ENCODE measurements at regions of chr10 and their contacts with region 1.

Region 1: GRCh38 chr10:14556285-14556956 is 218.3 kb downstream of the FAM107B start:
- DNase-seq: peak; percentile 61
- H3K4me3 Mint-ChIP-seq: peak overlapping the region; percentile 25
- H3K27ac Mint-ChIP-seq: peak overlapping the region; percentile 83
- H3K4me1 Mint-ChIP-seq: peaks cover 95% of the 10 kb centered on the region
- H3K27me3 Mint-ChIP-seq: no peaks in the 10 kb centered on the region

Region 2: DNA sequence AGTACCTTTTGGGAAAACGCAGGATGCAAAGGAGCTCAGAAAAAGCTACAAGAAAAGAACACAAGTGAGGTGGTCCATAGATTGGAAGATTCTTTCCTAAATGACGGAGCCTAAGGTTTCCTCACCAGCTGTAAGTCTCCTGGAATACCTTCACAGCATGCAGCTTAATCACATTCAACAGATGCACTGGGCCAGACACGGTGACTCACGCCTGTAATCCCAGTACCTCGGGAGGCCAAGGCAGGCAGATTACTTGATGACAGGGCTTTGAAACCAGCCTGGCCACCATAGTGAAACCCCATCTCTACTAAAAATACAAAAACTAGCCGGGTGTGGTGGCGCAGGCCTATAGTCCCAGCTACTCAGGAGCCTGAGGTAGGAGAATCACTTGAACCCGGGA is 454.4 kb before region 1 on chr10:
- CTCF ChIA-PET with region 1: no interaction called
- POLR2A ChIA-PET with region 1: no interaction called
- intact Hi-C with region 1: no loop called
- DNase-seq: no peak
- H3K4me3 Mint-ChIP-seq: no peak overlapping the region
- H3K27ac Mint-ChIP-seq: no peak overlapping the region
- H3K4me1 Mint-ChIP-seq: no peaks in the 10 kb centered on the region
- H3K27me3 Mint-ChIP-seq: no peaks in the 10 kb centered on the region

Region 3: GRCh38 chr10:14397066-14397465 is 159.4 kb before region 1 on chr10:
- CTCF ChIA-PET with region 1: no interaction called
- POLR2A ChIA-PET with region 1: no interaction called
- intact Hi-C with region 1: no loop called
- DNase-seq: no peak
- H3K4me3 Mint-ChIP-seq: no peak overlapping the region
- H3K27ac Mint-ChIP-seq: no peak overlapping the region
- H3K4me1 Mint-ChIP-seq: peaks cover 3% of the 10 kb centered on the region
- H3K27me3 Mint-ChIP-seq: peaks cover 18% of the 10 kb centered on the region

Region 4: GRCh38 chr10:14500172-14500765 is 56.2 kb before region 1 on chr10:
- CTCF ChIA-PET with region 1: interaction called, 3 read pairs
- POLR2A ChIA-PET with region 1: no interaction called
- intact Hi-C with region 1: loop called (anchors 1 kb)
- DNase-seq: no peak
- H3K4me3 Mint-ChIP-seq: no peak overlapping the region
- H3K27ac Mint-ChIP-seq: no peak overlapping the region
- H3K4me1 Mint-ChIP-seq: peaks cover 2% of the 10 kb centered on the region
- H3K27me3 Mint-ChIP-seq: no peaks in the 10 kb centered on the region

Region 5: DNA sequence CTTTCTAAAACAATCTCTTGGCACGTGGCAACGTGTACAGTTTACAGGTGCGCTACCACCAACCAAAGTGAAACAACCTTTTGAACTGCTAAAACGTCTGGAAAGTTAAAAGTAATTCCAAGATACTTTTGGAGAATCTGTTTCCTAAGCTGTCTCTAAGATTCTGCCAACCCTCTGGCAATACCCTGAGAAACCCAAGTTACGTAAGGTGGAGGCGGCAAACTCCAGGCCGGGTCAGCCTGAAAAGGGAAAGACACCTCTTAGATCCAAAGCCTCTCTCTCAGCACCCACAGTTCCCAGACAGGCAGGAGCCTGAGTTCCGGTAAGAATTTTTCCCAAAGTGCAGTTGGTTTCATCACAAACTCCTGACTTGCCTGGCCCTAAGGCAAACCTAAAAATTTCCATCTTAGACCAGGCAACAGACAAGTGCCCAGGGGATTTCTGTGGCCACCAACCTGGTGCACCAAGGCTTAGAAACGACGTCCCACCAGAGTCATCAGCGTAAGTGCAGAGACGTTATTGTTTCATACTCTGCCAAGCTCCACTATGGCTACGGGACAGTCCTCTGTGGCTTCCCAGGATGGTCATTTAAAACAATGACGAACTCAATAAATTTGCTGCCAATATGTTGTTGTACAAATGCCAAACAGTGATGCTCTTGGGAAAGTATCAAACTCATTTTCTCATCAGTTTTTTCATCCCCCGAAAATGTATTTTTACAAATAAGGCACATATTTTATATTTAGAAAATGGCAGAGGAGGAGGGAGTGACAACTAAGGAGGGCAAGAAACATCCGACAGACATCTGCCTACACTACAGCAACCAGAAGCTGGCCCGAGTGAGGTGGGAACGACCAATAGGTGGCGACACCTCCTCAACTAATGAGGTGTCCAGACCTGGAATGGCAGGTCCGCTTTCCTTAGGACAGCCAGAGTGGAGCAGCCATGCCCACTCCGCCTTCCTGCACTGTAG is 19.9 kb before region 1 on chr10:
- CTCF ChIA-PET with region 1: interaction called, 33 read pairs
- POLR2A ChIA-PET with region 1: interaction called, 3 read pairs
- intact Hi-C with region 1: loop called (anchors 2 kb)
- DNase-seq: peak; percentile 67
- H3K4me3 Mint-ChIP-seq: no peak overlapping the region
- H3K27ac Mint-ChIP-seq: peak overlapping the region; percentile 19
- H3K4me1 Mint-ChIP-seq: peaks cover 83% of the 10 kb centered on the region
- H3K27me3 Mint-ChIP-seq: no peaks in the 10 kb centered on the region

Region 6: GRCh38 chr10:14571866-14572507 is 15.6 kb after region 1 on chr10:
- CTCF ChIA-PET with region 1: interaction called, 8 read pairs
- POLR2A ChIA-PET with region 1: interaction called, 11 read pairs
- intact Hi-C with region 1: loop called (anchors 1 kb)
- DNase-seq: peak; percentile 78
- H3K4me3 Mint-ChIP-seq: peak overlapping the region; percentile 69
- H3K27ac Mint-ChIP-seq: peak overlapping the region; percentile 90
- H3K4me1 Mint-ChIP-seq: peaks cover 90% of the 10 kb centered on the region
- H3K27me3 Mint-ChIP-seq: no peaks in the 10 kb centered on the region

Region 7: DNA sequence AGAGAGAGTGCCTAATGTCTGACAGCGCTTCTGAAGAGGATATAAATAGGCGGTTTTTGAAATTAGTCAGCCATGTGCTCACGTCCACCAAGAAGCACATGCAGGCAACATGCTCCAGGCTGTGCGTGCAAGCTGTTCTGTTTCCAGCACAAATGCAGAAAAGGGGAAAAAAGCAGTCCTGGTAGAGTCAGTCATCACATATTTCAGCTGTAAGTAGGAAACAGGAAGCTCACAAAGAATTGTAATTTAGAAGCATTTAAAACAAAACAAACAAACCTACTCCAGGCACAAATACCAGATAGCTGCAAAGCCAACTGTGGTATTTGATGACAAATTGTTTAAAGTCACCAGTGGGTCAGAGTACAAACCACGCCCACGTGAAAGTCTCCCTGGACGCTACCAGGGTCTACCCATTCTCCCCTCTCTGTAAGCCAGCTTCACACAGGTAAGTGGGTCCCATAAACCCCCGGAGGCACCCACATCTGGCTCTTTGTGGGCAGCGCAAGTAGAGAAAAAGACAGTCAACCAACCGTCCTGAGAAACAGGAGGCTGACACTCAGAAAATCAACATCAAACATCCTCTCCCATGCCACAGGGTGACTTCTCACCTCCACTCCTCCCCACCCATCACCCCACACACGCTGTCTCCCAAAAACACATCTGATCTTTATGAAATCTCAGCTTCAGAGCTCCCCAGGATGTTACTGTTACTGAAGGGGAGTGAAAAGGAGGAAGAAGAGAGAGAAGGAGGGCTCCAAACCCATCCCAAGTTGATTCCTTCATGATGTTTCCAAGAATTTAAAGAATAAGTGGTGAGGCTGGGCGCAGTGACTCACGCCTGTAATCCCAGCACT is 31.9 kb after region 1 on chr10:
- CTCF ChIA-PET with region 1: interaction called, 10 read pairs
- POLR2A ChIA-PET with region 1: interaction called, 3 read pairs
- intact Hi-C with region 1: loop called (anchors 1 kb)
- DNase-seq: peak; percentile 82
- H3K4me3 Mint-ChIP-seq: peak overlapping the region; percentile 52
- H3K27ac Mint-ChIP-seq: peak overlapping the region; percentile 98
- H3K4me1 Mint-ChIP-seq: peaks cover 90% of the 10 kb centered on the region
- H3K27me3 Mint-ChIP-seq: no peaks in the 10 kb centered on the region

Region 8: DNA sequence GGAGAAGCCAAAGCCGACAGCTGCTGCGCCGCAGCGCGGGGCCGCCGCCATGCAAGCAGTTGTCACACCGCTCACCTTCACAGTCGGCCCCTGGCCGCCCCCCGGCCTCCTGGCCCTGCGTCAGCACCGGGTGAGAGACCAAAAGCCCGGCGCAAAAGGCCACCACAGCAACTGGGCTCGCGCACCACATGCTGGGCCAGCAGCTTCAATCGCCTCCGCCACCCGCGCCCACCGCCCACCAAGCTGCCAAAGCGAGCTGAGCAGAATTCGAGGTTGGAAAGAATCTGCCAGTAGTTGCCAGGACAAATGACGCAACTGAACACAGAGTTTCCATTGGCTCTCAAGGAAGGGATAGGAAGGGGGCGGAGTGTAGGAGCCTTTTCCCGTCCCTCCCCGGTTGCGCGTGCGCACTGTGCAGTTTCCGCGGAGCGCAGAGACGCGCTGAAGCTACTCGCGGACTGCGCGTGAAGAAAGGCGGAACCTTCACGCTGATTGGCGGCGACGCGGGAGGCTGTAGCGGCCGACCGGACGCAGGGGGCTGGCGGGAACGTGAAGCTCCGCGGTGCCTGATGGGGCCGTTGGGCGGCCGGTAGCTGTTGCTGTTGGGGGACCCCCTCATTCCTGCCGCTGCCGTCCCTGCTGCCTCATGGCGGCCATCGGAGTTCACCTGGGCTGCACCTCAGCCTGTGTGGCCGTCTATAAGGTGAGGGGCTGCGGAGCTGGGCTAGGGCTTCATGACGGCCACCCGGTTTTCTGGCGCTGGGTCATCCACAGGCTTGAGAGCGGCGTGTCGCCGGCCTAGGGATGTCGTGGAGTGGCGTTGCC is 281.5 kb after region 1 on chr10 and contains the starts of genes CDNF, HSPA14 and MSANTD7:
- CTCF ChIA-PET with region 1: interaction called, 7 read pairs
- POLR2A ChIA-PET with region 1: interaction called, 4 read pairs
- intact Hi-C with region 1: loop called (anchors 2 kb)
- DNase-seq: peak; percentile 100
- H3K4me3 Mint-ChIP-seq: peak within 1 kb of the TSS; percentile 93
- H3K27ac Mint-ChIP-seq: peak within 1 kb of the TSS; percentile 94
- H3K4me1 Mint-ChIP-seq: peaks cover 21% of the 10 kb centered on the region
- H3K27me3 Mint-ChIP-seq: no peaks in the 10 kb centered on the region
- total RNA-seq, gene CDNF: 1.6 to 1.8 TPM
- total RNA-seq, gene HSPA14: 31.1 to 31.2 TPM
- total RNA-seq, gene MSANTD7: 16.1 to 18.1 TPM

Region 9: GRCh38 chr10:14954001-14954770 is 397.8 kb after region 1 on chr10 and contains the start of gene DCLRE1C:
- CTCF ChIA-PET with region 1: no interaction called
- POLR2A ChIA-PET with region 1: no interaction called
- intact Hi-C with region 1: loop called (anchors 5 kb)
- DNase-seq: peak; percentile 93
- H3K4me3 Mint-ChIP-seq: peak within 1 kb of the TSS; percentile 91
- H3K27ac Mint-ChIP-seq: peak within 1 kb of the TSS; percentile 96
- H3K4me1 Mint-ChIP-seq: peaks cover 47% of the 10 kb centered on the region
- H3K27me3 Mint-ChIP-seq: no peaks in the 10 kb centered on the region
- total RNA-seq, gene DCLRE1C: 17.2 to 18.3 TPM

Measured in activated CD4-positive, alpha-beta memory T cell treated with anti-CD3 and anti-CD28 coated beads for 36 hours (primary cell).